Activated CD4-positive, alpha-beta T cell treated with anti-CD3 and anti-CD28 coated beads for 36 hours (primary cell): ENCODE measurements at regions of chr19 and their contacts with region 1.

Region 1: GRCh38 chr19:41872775-41873647 is 4.1 kb upstream of the CD79A start:
- DNase-seq: peak; percentile 84
- ATAC-seq: no peak
- H3K4me3 Mint-ChIP-seq: no peak overlapping the region
- H3K27ac Mint-ChIP-seq: peak overlapping the region; percentile 88
- H3K4me1 Mint-ChIP-seq: peaks cover 84% of the 10 kb centered on the region
- H3K27me3 Mint-ChIP-seq: no peaks in the 10 kb centered on the region

Region 2: GRCh38 chr19:41195675-41196497 is 677.1 kb before region 1 on chr19:
- CTCF ChIA-PET with region 1: no interaction called
- POLR2A ChIA-PET with region 1: no interaction called
- intact Hi-C with region 1: no loop called
- DNase-seq: no peak
- ATAC-seq: no peak
- H3K4me3 Mint-ChIP-seq: no peak overlapping the region
- H3K27ac Mint-ChIP-seq: no peak overlapping the region
- H3K4me1 Mint-ChIP-seq: peaks cover 16% of the 10 kb centered on the region
- H3K27me3 Mint-ChIP-seq: peaks cover 29% of the 10 kb centered on the region

Region 3: GRCh38 chr19:41883821-41884733 is 11.1 kb after region 1 on chr19:
- CTCF ChIA-PET with region 1: interaction called, 62 read pairs
- POLR2A ChIA-PET with region 1: interaction called, 35 read pairs
- intact Hi-C with region 1: loop called (anchors 1 kb)
- DNase-seq: peak; percentile 94
- ATAC-seq: peak; percentile 75
- H3K4me3 Mint-ChIP-seq: peak overlapping the region; percentile 68
- H3K27ac Mint-ChIP-seq: peak overlapping the region; percentile 96
- H3K4me1 Mint-ChIP-seq: peaks cover 54% of the 10 kb centered on the region
- H3K27me3 Mint-ChIP-seq: no peaks in the 10 kb centered on the region

Region 4: DNA sequence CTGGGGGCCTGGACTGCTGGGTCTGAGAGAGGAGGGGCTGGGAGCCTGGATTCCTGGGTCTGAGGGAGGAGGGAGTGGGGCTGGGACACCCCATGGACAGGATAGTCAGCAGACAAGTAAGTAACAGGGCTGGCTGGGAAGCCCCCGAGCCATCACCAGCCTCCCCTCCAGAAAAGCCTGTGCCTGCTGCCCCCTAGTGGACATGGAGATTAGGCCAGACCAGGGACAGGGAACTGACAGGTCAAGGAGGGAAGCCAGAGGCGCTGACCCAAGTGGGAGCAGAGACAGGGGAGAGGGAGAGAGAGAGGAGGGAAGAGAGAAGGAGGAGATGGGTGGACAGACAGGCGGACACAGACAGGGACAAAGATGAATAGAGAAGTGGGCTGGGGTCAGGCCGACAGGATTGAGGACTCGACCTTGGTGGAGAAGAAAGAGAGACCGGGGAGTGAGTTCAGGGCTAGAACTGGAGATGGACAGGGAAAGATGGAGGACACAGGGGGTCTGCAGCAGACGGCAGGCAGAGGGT is 61.9 kb after region 1 on chr19:
- CTCF ChIA-PET with region 1: interaction called, 3 read pairs
- POLR2A ChIA-PET with region 1: interaction called, 5 read pairs
- intact Hi-C with region 1: loop called (anchors 1 to 2 kb)
- DNase-seq: peak; percentile 89
- ATAC-seq: peak; percentile 77
- H3K4me3 Mint-ChIP-seq: no peak overlapping the region
- H3K27ac Mint-ChIP-seq: peak overlapping the region; percentile 57
- H3K4me1 Mint-ChIP-seq: peaks cover 38% of the 10 kb centered on the region
- H3K27me3 Mint-ChIP-seq: peaks cover 2% of the 10 kb centered on the region

Region 5: GRCh38 chr19:41945135-41945766 is 72.2 kb after region 1 on chr19:
- CTCF ChIA-PET with region 1: interaction called, 40 read pairs
- POLR2A ChIA-PET with region 1: interaction called, 8 read pairs
- intact Hi-C with region 1: loop called in 1 of 2 experiments (anchors 1 kb)
- DNase-seq: peak; percentile 95
- ATAC-seq: peak; percentile 92
- H3K4me3 Mint-ChIP-seq: peak overlapping the region; percentile 41
- H3K27ac Mint-ChIP-seq: peak overlapping the region; percentile 96
- H3K4me1 Mint-ChIP-seq: peaks cover 50% of the 10 kb centered on the region
- H3K27me3 Mint-ChIP-seq: peaks cover 4% of the 10 kb centered on the region

Region 6: DNA sequence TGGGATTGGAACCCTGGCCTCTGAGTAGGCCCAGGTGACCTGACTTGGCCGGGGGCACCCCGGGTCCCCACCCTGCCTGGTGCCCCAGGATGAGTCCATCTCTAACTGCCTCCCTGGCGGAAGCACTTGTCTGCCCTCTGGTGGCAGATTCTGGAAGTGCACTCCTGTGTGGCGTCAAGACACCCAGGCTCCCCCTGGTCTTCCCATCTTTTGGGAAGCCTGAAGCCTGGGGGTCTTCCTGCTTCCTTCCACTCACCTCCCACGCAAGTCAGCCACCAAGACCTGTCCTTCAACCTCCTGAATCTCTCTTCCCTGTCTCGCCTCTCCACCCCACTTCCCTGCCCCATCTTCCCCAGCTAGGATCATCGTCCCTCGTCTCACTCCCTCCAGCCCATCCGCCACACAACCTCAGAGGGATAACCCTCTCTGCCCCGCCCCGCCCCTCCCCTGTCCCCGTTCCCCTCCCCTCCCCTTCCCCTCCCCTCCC is 78.7 kb after region 1 on chr19:
- CTCF ChIA-PET with region 1: interaction called, 40 read pairs
- POLR2A ChIA-PET with region 1: interaction called, 8 read pairs
- intact Hi-C with region 1: loop called (anchors 1 kb)
- DNase-seq: peak; percentile 94
- ATAC-seq: peak; percentile 90
- H3K4me3 Mint-ChIP-seq: no peak overlapping the region
- H3K27ac Mint-ChIP-seq: peak overlapping the region; percentile 7
- H3K4me1 Mint-ChIP-seq: peaks cover 15% of the 10 kb centered on the region
- H3K27me3 Mint-ChIP-seq: no peaks in the 10 kb centered on the region

Region 7: GRCh38 chr19:42066075-42066754 is 193.2 kb after region 1 on chr19:
- CTCF ChIA-PET with region 1: no interaction called
- POLR2A ChIA-PET with region 1: no interaction called
- intact Hi-C with region 1: no loop called
- DNase-seq: no peak
- ATAC-seq: peak; percentile 16
- H3K4me3 Mint-ChIP-seq: no peak overlapping the region
- H3K27ac Mint-ChIP-seq: no peak overlapping the region
- H3K4me1 Mint-ChIP-seq: no peaks in the 10 kb centered on the region
- H3K27me3 Mint-ChIP-seq: no peaks in the 10 kb centered on the region

Region 8: GRCh38 chr19:42121656-42122069 is 248.7 kb after region 1 on chr19:
- CTCF ChIA-PET with region 1: no interaction called
- POLR2A ChIA-PET with region 1: no interaction called
- intact Hi-C with region 1: loop called in 1 of 2 experiments (anchors 5 kb)
- DNase-seq: peak; percentile 93
- ATAC-seq: peak; percentile 81
- H3K4me3 Mint-ChIP-seq: peak overlapping the region; percentile 80
- H3K27ac Mint-ChIP-seq: peak overlapping the region; percentile 94
- H3K4me1 Mint-ChIP-seq: peaks cover 57% of the 10 kb centered on the region
- H3K27me3 Mint-ChIP-seq: no peaks in the 10 kb centered on the region

Region 9: GRCh38 chr19:42370626-42371170 is 497.7 kb after region 1 on chr19:
- CTCF ChIA-PET with region 1: no interaction called
- POLR2A ChIA-PET with region 1: no interaction called
- intact Hi-C with region 1: no loop called
- DNase-seq: no peak
- ATAC-seq: no peak
- H3K4me3 Mint-ChIP-seq: no peak overlapping the region
- H3K27ac Mint-ChIP-seq: no peak overlapping the region
- H3K4me1 Mint-ChIP-seq: no peaks in the 10 kb centered on the region
- H3K27me3 Mint-ChIP-seq: no peaks in the 10 kb centered on the region